GM10248 (cell line): ENCODE measurements at regions of chr7 and their contacts with region 1.

Region 1: GRCh38 chr7:80187279-80187678 is 52.6 kb downstream of the GNAI1 start:
- DNase-seq: no peak
- CTCF ChIP-seq: no peak

Region 2: GRCh38 chr7:80197627-80198026 is 10.3 kb after region 1 on chr7:
- CTCF ChIA-PET with region 1: interaction called, 13 read pairs
- POLR2A ChIA-PET with region 1: no interaction called
- DNase-seq: no peak
- CTCF ChIP-seq: no peak